ENCODE measurements at regions of chr11 and their contacts with region 1.

Region 1: GRCh38 chr11:123020968-123021367 is 39.3 kb upstream of the BSX start:
- DNase-seq: peak; percentile 13 to 32
- H3K4me3 ChIP-seq: no peak overlapping the region
- H3K27ac ChIP-seq: no peak overlapping the region
- H3K4me1 ChIP-seq: no peaks in the 10 kb centered on the region
- H3K27me3 ChIP-seq: no peaks in the 10 kb centered on the region
- CTCF ChIP-seq: peak in 5 of 6 experiments; percentile 16 to 66 (median 31)
- POLR2A ChIP-seq: no peak

Region 2: DNA sequence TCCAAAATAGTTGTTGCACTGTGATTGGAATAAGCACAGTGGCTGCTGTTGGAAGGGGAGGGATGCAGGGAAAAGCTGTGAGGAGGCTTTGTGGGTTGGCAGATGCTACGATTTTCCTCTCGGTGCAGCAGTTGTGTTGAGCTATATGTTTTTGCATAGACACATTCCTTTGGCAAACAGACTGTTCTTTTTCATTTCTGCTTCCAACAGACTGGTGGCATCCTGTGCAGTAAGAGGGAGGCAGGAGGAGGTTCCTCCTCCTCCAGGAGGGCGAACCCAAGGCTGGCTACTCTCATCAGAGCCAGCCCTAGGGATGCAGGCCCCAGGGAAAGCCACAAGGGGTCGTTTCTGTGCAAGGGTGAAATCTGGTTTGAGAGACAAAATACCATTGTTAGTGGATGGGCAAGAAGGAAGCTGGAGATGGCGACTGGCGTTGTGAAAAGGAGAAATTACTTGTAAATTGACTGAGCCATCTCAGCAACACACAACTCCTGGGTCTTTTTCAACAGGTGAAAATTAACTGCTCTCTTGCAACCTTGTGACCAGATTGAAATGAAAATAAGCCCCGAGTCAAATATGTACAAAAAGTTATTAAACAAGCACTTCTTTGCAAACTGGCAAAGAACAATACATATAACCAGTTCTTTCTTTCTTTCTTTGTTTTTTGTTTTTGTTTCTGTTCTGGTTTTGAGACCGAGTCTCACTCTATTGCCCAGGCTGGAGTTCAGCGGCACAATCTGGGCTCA is 392.0 kb before region 1 on chr11:
- intact Hi-C with region 1: loop called (anchors 10 kb)
- DNase-seq: peak; percentile 55 to 61
- H3K4me3 ChIP-seq: no peak overlapping the region
- H3K27ac ChIP-seq: no peak overlapping the region
- H3K4me1 ChIP-seq: peaks cover 0 to 3% of the 10 kb centered on the region in 2 donors
- H3K27me3 ChIP-seq: no peaks in the 10 kb centered on the region
- CTCF ChIP-seq: peak; percentile 12 to 76 (median 60)
- POLR2A ChIP-seq: no peak

Region 3: DNA sequence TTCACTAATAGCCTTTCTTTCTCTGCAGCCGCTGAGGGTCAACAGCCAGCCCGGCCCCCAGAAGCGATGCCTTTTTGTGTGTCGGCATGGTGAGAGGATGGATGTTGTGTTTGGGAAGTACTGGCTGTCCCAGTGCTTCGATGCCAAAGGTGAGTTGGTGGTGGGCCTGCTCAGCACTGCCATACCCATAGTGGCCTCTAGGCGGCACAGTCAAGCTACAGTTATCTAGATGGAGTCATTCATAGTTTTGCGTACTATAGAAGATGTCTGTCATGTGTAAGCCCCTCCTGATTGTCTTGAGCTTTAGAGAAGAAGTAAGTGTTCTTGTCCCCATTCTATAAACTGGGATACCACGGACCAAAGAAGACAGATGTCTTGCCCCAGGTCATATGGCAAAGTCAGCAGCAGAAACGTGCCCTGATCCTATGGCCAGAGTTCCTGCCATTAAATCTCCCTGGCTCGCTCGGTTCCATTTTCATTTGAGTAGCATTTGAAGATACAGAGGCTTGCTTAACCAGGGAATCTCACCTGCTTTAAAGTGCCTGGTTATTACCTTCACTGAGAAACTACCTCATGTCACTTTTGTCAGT is 224.7 kb before region 1 on chr11:
- intact Hi-C with region 1: loop called (anchors 5 kb)
- DNase-seq: peak; percentile 66 to 71
- H3K4me3 ChIP-seq: no peak overlapping the region
- H3K27ac ChIP-seq: no peak overlapping the region
- H3K4me1 ChIP-seq: no peaks in the 10 kb centered on the region
- H3K27me3 ChIP-seq: no peaks in the 10 kb centered on the region
- CTCF ChIP-seq: peak; percentile 84 to 94 (median 91)
- POLR2A ChIP-seq: no peak

Region 4: GRCh38 chr11:122863704-122864326 is 157.2 kb before region 1 on chr11:
- intact Hi-C with region 1: loop called (anchors 5 kb)
- DNase-seq: peak; percentile 54 to 70
- H3K4me3 ChIP-seq: no peak overlapping the region
- H3K27ac ChIP-seq: no peak overlapping the region
- H3K4me1 ChIP-seq: no peaks in the 10 kb centered on the region
- H3K27me3 ChIP-seq: no peaks in the 10 kb centered on the region
- CTCF ChIP-seq: peak; percentile 71 to 92 (median 86)
- POLR2A ChIP-seq: no peak